ENCODE measurements at regions of chr10 and their contacts with region 1.

Region 1: GRCh38 chr10:84429926-84430520 is 101.6 kb downstream of the CCSER2 start:
- DNase-seq: peak; percentile 77
- ATAC-seq: peak; percentile 91
- H3K4me3 Mint-ChIP-seq: no peak overlapping the region
- H3K27ac Mint-ChIP-seq: no peak overlapping the region
- H3K4me1 Mint-ChIP-seq: peaks cover 9% of the 10 kb centered on the region
- H3K27me3 Mint-ChIP-seq: no peaks in the 10 kb centered on the region

Region 2: GRCh38 chr10:84224411-84225028 is 205.5 kb before region 1 on chr10:
- CTCF ChIA-PET with region 1: no interaction called
- POLR2A ChIA-PET with region 1: no interaction called
- DNase-seq: peak; percentile 27
- ATAC-seq: no peak
- H3K4me3 Mint-ChIP-seq: no peak overlapping the region
- H3K27ac Mint-ChIP-seq: no peak overlapping the region
- H3K4me1 Mint-ChIP-seq: no peaks in the 10 kb centered on the region
- H3K27me3 Mint-ChIP-seq: peaks cover 11% of the 10 kb centered on the region

Region 3: GRCh38 chr10:84352251-84352842 is 77.7 kb before region 1 on chr10:
- CTCF ChIA-PET with region 1: interaction called, 12 read pairs
- POLR2A ChIA-PET with region 1: no interaction called
- DNase-seq: peak; percentile 79
- ATAC-seq: peak; percentile 93
- H3K4me3 Mint-ChIP-seq: no peak overlapping the region
- H3K27ac Mint-ChIP-seq: no peak overlapping the region
- H3K4me1 Mint-ChIP-seq: peaks cover 54% of the 10 kb centered on the region
- H3K27me3 Mint-ChIP-seq: no peaks in the 10 kb centered on the region

Region 4: DNA sequence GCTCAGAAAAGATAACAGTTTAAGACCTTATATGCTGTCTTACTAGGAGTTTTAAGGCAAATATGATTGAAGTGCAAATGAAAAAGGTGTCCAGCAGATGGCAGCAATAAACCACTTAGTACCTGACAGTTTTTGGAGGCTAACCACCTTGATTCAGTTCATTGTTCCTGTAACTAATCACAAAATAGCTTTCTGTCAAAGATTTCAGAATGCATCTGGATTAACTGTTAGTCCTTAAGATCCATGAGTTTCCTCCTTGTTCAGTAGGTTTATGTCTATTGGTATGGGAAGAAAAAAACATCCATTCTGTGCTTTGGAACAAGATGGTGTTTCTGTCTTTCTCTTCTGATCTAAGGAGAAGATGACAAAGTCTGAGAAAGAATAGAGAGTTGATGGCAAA is 55.0 kb before region 1 on chr10:
- CTCF ChIA-PET with region 1: interaction called, 14 read pairs
- POLR2A ChIA-PET with region 1: no interaction called
- DNase-seq: peak; percentile 65
- ATAC-seq: no peak
- H3K4me3 Mint-ChIP-seq: no peak overlapping the region
- H3K27ac Mint-ChIP-seq: no peak overlapping the region
- H3K4me1 Mint-ChIP-seq: peaks cover 22% of the 10 kb centered on the region
- H3K27me3 Mint-ChIP-seq: no peaks in the 10 kb centered on the region

Region 5: DNA sequence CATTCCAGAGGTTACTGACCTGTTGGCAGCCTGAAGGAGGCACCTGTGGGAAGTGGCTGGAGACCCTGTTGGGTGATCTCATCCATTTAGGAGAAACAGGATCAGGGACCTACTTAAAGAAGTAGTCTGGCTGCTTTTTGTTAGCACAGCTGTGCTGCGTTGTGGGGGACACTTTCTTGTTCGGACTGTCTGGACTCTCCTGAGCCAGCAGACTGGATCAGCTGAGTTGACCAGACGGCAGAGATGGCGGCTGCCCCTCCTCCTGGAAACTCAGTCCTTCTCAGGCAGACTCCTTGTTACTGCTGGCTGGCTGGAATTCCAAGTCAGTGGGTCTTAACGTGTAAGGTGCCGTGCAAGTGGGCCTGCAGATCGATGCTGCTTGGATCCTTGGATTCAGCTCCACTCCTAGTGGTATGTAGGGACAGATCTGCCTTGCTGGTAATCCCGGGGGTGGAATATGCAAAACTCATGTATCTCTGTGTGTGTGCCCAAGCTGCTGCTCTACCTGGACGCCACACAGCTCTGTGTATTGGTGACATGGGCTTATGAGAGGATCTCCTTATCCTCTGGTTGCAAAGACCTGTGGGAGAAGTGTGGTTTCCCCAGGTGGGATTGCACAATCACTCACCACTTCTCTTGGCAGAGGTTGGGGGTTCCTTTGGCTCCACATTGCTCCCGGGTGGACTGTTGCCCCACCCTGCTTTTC is 14.3 kb before region 1 on chr10:
- CTCF ChIA-PET with region 1: interaction called, 12 read pairs
- POLR2A ChIA-PET with region 1: no interaction called
- DNase-seq: no peak
- ATAC-seq: no peak
- H3K4me3 Mint-ChIP-seq: no peak overlapping the region
- H3K27ac Mint-ChIP-seq: no peak overlapping the region
- H3K4me1 Mint-ChIP-seq: peaks cover 12% of the 10 kb centered on the region
- H3K27me3 Mint-ChIP-seq: no peaks in the 10 kb centered on the region

Region 6: GRCh38 chr10:84440781-84441180 is 10.8 kb after region 1 on chr10:
- CTCF ChIA-PET with region 1: interaction called, 14 read pairs
- POLR2A ChIA-PET with region 1: no interaction called
- DNase-seq: no peak
- ATAC-seq: no peak
- H3K4me3 Mint-ChIP-seq: no peak overlapping the region
- H3K27ac Mint-ChIP-seq: no peak overlapping the region
- H3K4me1 Mint-ChIP-seq: no peaks in the 10 kb centered on the region
- H3K27me3 Mint-ChIP-seq: no peaks in the 10 kb centered on the region

Region 7: GRCh38 chr10:84452003-84452402 is 22.0 kb after region 1 on chr10:
- CTCF ChIA-PET with region 1: interaction called, 17 read pairs
- POLR2A ChIA-PET with region 1: no interaction called
- DNase-seq: no peak
- ATAC-seq: no peak
- H3K4me3 Mint-ChIP-seq: no peak overlapping the region
- H3K27ac Mint-ChIP-seq: no peak overlapping the region
- H3K4me1 Mint-ChIP-seq: no peaks in the 10 kb centered on the region
- H3K27me3 Mint-ChIP-seq: no peaks in the 10 kb centered on the region